ENCODE measurements at regions of chr2 and their contacts with region 1.

Region 1: DNA sequence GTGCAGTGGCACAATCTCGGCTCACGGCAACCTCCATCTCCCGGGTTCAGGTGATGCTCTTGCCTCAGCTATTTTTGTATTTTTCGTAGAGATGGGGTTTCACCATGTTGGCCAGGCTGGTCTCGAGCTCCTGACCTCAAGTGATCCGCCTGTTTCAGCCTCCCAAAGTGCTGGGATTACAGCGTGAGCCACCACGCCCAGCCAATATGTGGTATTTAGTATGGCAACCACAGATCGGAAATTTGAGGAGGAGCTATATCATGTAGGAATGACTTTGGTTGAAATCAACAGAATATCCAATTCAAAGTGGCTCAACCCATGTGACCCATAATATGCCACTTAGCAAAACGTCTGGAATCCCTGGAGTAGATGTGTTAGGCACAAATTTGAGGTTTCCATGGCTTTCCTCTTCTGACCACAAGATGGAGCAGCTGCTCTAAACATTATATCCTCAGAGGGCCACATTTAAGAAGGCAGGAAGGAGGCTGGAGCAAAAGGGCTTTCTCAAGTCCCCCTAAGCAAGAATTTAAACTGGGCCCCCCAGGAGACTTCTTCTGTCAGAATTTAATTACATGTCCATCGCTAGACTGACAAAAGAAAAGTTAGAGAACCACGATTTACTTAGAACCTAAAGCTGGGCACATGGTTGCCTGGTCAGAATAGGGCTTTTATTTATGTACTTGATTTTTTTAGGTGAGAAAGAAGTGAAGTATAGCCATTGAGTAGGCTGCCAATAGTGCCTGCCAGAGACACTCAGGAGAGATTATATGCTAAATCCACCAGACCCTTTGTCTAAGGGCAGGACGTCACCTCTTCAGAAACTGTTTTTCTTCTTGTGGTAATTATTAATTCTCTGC is 49.6 kb upstream of the ITSN2 start:
- DNase-seq: peak; percentile 49 to 66
- H3K4me3 ChIP-seq: no peak overlapping the region
- H3K4me3 Mint-ChIP-seq: no peak overlapping the region
- H3K27ac Mint-ChIP-seq: no peak overlapping the region
- H3K4me1 ChIP-seq: no peaks in the 10 kb centered on the region
- H3K4me1 Mint-ChIP-seq: no peaks in the 10 kb centered on the region
- H3K27me3 ChIP-seq: no peaks in the 10 kb centered on the region
- H3K27me3 Mint-ChIP-seq: no peaks in the 10 kb centered on the region
- CTCF ChIP-seq: peak; percentile 80 to 90

Region 2: DNA sequence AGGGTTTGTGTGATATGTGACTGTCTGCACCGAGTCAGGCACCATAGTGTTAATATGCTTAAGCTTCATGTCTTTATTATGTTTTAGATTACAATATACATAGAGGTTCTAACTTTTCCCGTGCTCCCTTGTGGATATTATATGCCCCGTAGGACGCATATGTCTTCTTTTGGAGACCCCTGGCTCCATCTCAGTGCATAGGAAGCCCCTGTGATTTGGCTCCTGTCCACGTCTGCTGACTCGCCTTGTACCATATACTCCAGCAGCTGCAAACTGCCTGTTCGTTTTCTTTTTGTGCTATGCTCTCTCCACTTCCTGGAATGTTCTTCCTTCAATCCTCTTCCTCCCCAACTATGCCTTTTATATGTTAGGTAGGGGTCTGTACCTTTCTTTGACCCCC is 272.4 kb after region 1 on chr2:
- CTCF ChIA-PET with region 1: no interaction called
- POLR2A ChIA-PET with region 1: no interaction called
- intact Hi-C with region 1: loop called (anchors 10 kb)
- DNase-seq: no peak
- H3K4me3 ChIP-seq: no peak overlapping the region
- H3K4me3 Mint-ChIP-seq: no peak overlapping the region
- H3K27ac Mint-ChIP-seq: no peak overlapping the region
- H3K4me1 ChIP-seq: no peaks in the 10 kb centered on the region
- H3K4me1 Mint-ChIP-seq: no peaks in the 10 kb centered on the region
- H3K27me3 ChIP-seq: no peaks in the 10 kb centered on the region
- H3K27me3 Mint-ChIP-seq: no peaks in the 10 kb centered on the region
- CTCF ChIP-seq: no peak

Region 3: DNA sequence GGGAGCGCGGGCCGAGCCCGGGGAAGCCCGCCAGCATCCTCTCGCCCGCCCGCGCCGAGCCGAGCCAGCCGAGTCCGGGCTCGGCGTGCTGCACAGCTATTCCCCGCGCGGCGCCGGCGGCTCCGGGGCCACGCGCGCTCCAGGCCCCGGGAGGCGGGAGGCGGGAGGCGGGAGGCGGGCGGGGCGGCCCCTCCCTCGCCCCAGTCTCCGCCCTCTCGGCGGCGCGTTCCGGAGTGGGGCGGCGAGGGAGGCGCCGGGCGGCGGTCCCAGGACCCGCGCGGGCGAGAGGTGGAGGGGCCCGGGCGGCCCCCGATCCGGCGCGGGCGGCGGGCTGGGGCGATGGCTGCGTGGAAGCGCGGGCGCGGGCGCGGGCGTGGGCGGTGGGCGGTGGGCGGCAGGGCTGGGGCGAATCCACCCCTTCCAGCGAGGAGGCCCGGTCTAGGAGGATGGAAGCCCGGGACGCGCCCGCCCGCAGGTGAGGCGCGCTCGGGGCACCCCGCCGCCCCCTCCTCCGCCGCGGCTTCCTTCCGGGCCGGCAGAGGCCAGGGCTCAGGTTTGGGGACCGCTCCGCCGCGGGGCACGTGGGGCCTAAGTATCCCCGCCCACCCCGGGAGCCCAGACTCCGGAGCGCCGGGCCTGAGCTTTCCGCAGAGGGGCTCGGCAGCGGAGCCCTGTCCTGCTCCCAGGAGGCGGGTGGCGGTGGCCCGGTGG is 510.3 kb after region 1 on chr2 and contains the start of gene ADCY3:
- CTCF ChIA-PET with region 1: no interaction called
- POLR2A ChIA-PET with region 1: no interaction called
- intact Hi-C with region 1: loop called (anchors 10 kb)
- DNase-seq: peak; percentile 60 to 65
- H3K4me3 ChIP-seq: peak within 1 kb of the TSS; percentile 66
- H3K4me3 Mint-ChIP-seq: peak within 1 kb of the TSS; percentile 89
- H3K27ac Mint-ChIP-seq: no peak within 1 kb of the TSS
- H3K4me1 ChIP-seq: peaks cover 6% of the 10 kb centered on the region; the same call in 1 of the 2 replicates
- H3K4me1 Mint-ChIP-seq: peaks cover 18% of the 10 kb centered on the region
- H3K27me3 ChIP-seq: no peaks in the 10 kb centered on the region
- H3K27me3 Mint-ChIP-seq: no peaks in the 10 kb centered on the region
- CTCF ChIP-seq: no peak
- total RNA-seq, gene ADCY3: 71.3 and 75.6 TPM in 2 replicates

Measured in Caco-2 (cell line).